Esophagus squamous epithelium (tissue), 5 donors: ENCODE measurements at regions of chr5 and their contacts with region 1.

Region 1: GRCh38 chr5:72141440-72142355 is 34.4 kb downstream of the MAP1B start:
- DNase-seq: no peak
- H3K4me3 ChIP-seq: no peak overlapping the region
- H3K27ac ChIP-seq: peak overlapping the region; percentile 56 to 85 (median 78)
- H3K4me1 ChIP-seq: peaks cover 4 to 78% (median 30%) of the 10 kb centered on the region in 3 donors
- H3K27me3 ChIP-seq: peaks cover 0 to 27% (median 0%) of the 10 kb centered on the region in 4 donors
- CTCF ChIP-seq: no peak
- POLR2A ChIP-seq: no peak

Region 2: DNA sequence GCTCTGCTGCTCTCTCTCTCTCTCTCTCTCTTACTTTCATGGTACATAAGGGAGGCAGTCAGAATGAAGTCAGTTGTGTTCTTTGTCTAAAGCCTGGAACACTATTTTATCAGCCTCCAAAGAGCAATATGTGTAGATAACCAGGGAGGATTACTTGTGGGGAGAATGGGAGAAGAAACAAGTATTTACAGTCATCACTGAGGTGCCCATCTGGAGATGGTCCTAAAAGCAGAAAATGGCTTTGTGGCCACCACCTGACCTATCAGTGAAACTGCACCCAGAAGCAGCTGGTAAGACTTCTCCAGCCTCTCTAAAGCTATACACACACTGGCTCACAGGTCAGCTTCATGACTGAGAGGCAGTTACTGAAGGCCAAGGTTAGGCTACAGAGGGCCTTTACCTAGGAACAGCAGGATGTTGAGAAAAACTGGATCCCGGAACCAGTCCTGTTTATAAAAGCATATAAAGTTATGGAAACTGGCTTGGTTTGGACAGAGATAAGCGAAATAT is 103.2 kb after region 1 on chr5:
- intact Hi-C with region 1: loop called (anchors 10 kb)
- DNase-seq: no peak
- H3K4me3 ChIP-seq: no peak overlapping the region
- H3K27ac ChIP-seq: peak overlapping the region in 3 of 4 donors; percentile 41 to 73 (median 67)
- H3K4me1 ChIP-seq: peaks cover 5 to 52% (median 19%) of the 10 kb centered on the region in 3 donors
- H3K27me3 ChIP-seq: no peaks in the 10 kb centered on the region
- CTCF ChIP-seq: peak in 2 of 6 experiments; percentile 17 to 43
- POLR2A ChIP-seq: no peak